ENCODE measurements at regions of chr19 and their contacts with region 1.

Region 1: DNA sequence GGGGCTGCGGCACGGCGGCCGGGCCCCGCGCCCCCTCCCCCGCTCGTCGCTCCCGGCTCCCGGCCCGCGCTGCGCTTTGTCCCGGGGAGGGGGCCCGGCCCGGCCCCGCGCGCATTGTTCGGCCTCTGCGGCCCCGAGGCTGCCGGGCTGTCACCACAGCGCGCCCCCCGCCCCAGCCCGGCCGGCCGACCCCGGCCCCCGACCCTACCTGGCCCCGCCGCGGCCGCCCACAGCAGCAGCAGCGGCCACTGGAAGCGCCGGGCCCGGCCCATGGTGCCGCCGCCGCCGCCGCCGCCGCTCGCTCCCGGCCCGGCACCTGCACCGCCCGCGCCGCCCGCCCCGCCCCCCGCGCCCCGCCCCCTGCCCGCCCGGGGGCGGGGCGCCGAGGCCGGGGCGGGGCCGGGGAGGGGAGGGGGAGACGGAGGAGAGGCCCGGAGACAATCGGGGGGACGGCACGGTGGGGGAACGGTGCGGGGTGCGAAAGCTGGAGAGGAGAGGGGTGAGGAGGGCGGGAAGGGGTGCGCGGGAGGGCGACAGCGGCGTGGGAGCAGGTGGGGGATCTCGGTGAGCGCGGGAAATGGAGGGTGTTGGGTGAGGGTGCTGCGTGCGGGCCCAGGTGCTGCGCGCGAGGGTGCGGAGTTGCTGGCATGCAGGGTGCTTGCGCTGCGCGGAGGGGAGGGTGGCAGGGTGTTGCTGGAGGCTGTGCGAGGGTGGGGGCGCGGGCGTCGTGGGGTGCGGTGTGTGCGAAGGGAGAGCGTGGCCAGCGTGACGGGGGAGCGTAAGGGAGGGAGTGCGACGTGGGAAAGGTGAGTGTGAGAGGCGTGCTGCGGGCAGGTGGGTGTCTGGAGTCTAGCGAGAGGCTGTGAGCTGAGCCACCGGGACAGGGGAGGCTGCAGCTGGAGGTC is at the start of gene CADM4:
- DNase-seq: peak; percentile 16 to 39
- ATAC-seq: peak in 7 of 8 donors; percentile 30 to 70 (median 56)
- H3K4me3 ChIP-seq: peak within 1 kb of the TSS; percentile 18 to 60 (median 48)
- H3K27ac ChIP-seq: no peak within 1 kb of the TSS
- H3K4me1 ChIP-seq: peaks cover 0 to 9% (median 7%) of the 10 kb centered on the region in 9 donors
- H3K27me3 ChIP-seq: peaks cover 0 to 56% (median 16%) of the 10 kb centered on the region in 7 donors
- CTCF ChIP-seq: no peak
- total RNA-seq, gene CADM4: 3.0 to 12.3 (median 8.4) TPM

Region 2: GRCh38 chr19:43430142-43430710 is 209.5 kb before region 1 on chr19:
- intact Hi-C with region 1: no loop called
- DNase-seq: no peak
- ATAC-seq: peak in 1 of 8 donors; percentile 47
- H3K4me3 ChIP-seq: no peak overlapping the region
- H3K27ac ChIP-seq: no peak overlapping the region
- H3K4me1 ChIP-seq: peaks cover 0 to 17% (median 0%) of the 10 kb centered on the region in 9 donors
- H3K27me3 ChIP-seq: peaks cover 0 to 4% (median 0%) of the 10 kb centered on the region in 7 donors
- CTCF ChIP-seq: peak in 1 of 9 donors; percentile 8

Region 3: GRCh38 chr19:43545981-43546380 is 93.8 kb before region 1 on chr19:
- intact Hi-C with region 1: loop called in 2 of 10 experiments (anchors 10 kb)
- DNase-seq: no peak
- ATAC-seq: peak in 1 of 8 donors; percentile 16
- H3K4me3 ChIP-seq: no peak overlapping the region
- H3K27ac ChIP-seq: no peak overlapping the region
- H3K4me1 ChIP-seq: no peaks in the 10 kb centered on the region
- H3K27me3 ChIP-seq: no peaks in the 10 kb centered on the region
- CTCF ChIP-seq: no peak

Region 4: GRCh38 chr19:43555185-43555770 is 84.5 kb before region 1 on chr19:
- intact Hi-C with region 1: loop called in 1 of 10 experiments (anchors 10 kb)
- DNase-seq: peak in 1 of 2 donors; percentile 69
- ATAC-seq: peak in 6 of 8 donors; percentile 38 to 62 (median 50)
- H3K4me3 ChIP-seq: no peak overlapping the region
- H3K27ac ChIP-seq: no peak overlapping the region
- H3K4me1 ChIP-seq: no peaks in the 10 kb centered on the region
- H3K27me3 ChIP-seq: no peaks in the 10 kb centered on the region
- CTCF ChIP-seq: peak in 8 of 9 donors; percentile 44 to 76 (median 62)

Region 5: GRCh38 chr19:43651758-43652545 is 12.2 kb after region 1 on chr19:
- intact Hi-C with region 1: no loop called
- DNase-seq: peak; percentile 35 to 62
- ATAC-seq: peak; percentile 59 to 83 (median 74)
- H3K4me3 ChIP-seq: peak overlapping the region in 2 of 10 donors; percentile 8 to 10
- H3K27ac ChIP-seq: no peak overlapping the region
- H3K4me1 ChIP-seq: peaks cover 0 to 6% (median 0%) of the 10 kb centered on the region in 9 donors
- H3K27me3 ChIP-seq: no peaks in the 10 kb centered on the region
- CTCF ChIP-seq: peak; percentile 48 to 86 (median 75)

Measured in heart right ventricle (tissue), 16 donors.